ENCODE measurements at regions of chr6 and their contacts with region 1.

Region 1: DNA sequence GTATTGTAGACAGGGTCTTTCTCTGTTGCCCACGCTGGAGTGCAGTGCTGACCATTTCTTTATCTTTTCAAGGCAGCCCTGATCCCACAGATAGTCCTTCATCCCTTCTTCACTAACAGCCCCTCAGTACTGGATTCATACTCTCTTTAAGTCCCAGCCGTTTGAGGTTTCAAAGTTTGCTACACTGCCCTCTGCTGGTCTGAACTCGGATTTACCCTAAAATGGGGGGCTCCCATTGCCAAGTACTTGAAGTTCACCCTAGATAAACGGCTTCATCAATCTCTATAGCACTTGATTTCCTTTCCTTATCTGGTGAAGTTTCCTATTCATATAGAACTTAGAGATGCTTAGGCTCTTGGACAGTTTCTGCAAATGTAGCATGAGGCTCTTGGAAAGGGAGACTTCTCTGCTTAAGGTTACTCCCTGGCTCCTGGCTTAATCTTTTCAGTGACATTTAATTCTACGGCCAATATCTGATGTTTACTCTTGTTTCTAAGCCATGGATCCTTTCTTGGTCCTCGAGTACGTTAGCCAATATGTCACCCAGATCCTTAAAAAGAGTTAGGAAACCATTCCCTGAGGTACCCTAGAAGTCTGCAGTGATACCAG is 21.4 kb upstream of the PREP start:
- DNase-seq: peak in 1 of 2 donors; percentile 19
- ATAC-seq: peak in 6 of 8 donors; percentile 31 to 63 (median 46)
- H3K4me3 ChIP-seq: no peak overlapping the region
- H3K27ac ChIP-seq: no peak overlapping the region
- H3K4me1 ChIP-seq: peaks cover 0 to 12% (median 0%) of the 10 kb centered on the region in 9 donors
- H3K27me3 ChIP-seq: no peaks in the 10 kb centered on the region
- CTCF ChIP-seq: peak; percentile 34 to 76 (median 70)

Region 2: GRCh38 chr6:105087571-105088211 is 336.6 kb before region 1 on chr6:
- intact Hi-C with region 1: loop called (anchors 1 to 5 kb)
- DNase-seq: peak in 1 of 2 donors; percentile 28
- ATAC-seq: peak in 4 of 8 donors; percentile 43 to 62 (median 58)
- H3K4me3 ChIP-seq: no peak overlapping the region
- H3K27ac ChIP-seq: no peak overlapping the region
- H3K4me1 ChIP-seq: peaks cover 0 to 8% (median 0%) of the 10 kb centered on the region in 9 donors
- H3K27me3 ChIP-seq: no peaks in the 10 kb centered on the region
- CTCF ChIP-seq: peak; percentile 65 to 92 (median 84)

Region 3: GRCh38 chr6:105097288-105097687 is 327.0 kb before region 1 on chr6:
- intact Hi-C with region 1: loop called in 1 of 10 experiments (anchors 5 kb)
- DNase-seq: no peak
- ATAC-seq: no peak
- H3K4me3 ChIP-seq: no peak overlapping the region
- H3K27ac ChIP-seq: no peak overlapping the region
- H3K4me1 ChIP-seq: no peaks in the 10 kb centered on the region
- H3K27me3 ChIP-seq: no peaks in the 10 kb centered on the region
- CTCF ChIP-seq: no peak

Region 4: DNA sequence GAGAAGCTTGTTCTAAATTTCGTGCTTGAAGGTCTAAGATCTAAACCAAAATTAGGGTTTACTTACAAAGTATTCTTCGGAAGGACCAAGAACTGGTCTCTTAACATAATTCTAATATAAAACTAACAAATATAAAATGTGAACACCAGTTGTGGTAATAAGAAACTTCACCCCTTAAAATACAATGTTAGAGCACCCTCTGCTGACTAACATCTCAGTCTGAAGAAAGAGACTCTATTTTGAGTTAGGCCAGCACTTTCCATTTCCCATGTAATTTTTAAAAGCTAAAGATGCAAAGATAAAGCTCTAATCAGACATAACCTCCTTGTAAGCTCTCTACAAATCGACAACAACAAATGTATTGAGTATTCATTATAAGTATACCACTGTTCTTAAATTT is 876.7 kb after region 1 on chr6:
- intact Hi-C with region 1: loop called in 1 of 10 experiments (anchors 10 kb)
- DNase-seq: no peak
- ATAC-seq: peak in 1 of 8 donors; percentile 38
- H3K4me3 ChIP-seq: no peak overlapping the region
- H3K27ac ChIP-seq: no peak overlapping the region
- H3K4me1 ChIP-seq: peaks cover 0 to 5% (median 0%) of the 10 kb centered on the region in 9 donors
- H3K27me3 ChIP-seq: no peaks in the 10 kb centered on the region
- CTCF ChIP-seq: peak; percentile 15 to 68 (median 57)